Activated naive CD4-positive, alpha-beta T cell treated with anti-CD3 and anti-CD28 coated beads, Interleukin-2, amount 10 ng/mL, durations not matched to agents 7 days and 5 days (primary cell): ENCODE measurements at regions of chr5 and their contacts with region 1.

Region 1: GRCh38 chr5:143008809-143009521 is 238.8 kb downstream of the ARHGAP26 start:
- DNase-seq: peak; percentile 81
- H3K4me3 Mint-ChIP-seq: no peak overlapping the region
- H3K27ac Mint-ChIP-seq: peak overlapping the region; percentile 83
- H3K4me1 Mint-ChIP-seq: peaks cover 70% of the 10 kb centered on the region
- H3K27me3 Mint-ChIP-seq: no peaks in the 10 kb centered on the region

Region 2: GRCh38 chr5:142922223-142922952 is 86.6 kb before region 1 on chr5:
- CTCF ChIA-PET with region 1: interaction called, 29 read pairs
- DNase-seq: no peak
- H3K4me3 Mint-ChIP-seq: no peak overlapping the region
- H3K27ac Mint-ChIP-seq: peak overlapping the region; percentile 47
- H3K4me1 Mint-ChIP-seq: peaks cover 23% of the 10 kb centered on the region
- H3K27me3 Mint-ChIP-seq: no peaks in the 10 kb centered on the region

Region 3: DNA sequence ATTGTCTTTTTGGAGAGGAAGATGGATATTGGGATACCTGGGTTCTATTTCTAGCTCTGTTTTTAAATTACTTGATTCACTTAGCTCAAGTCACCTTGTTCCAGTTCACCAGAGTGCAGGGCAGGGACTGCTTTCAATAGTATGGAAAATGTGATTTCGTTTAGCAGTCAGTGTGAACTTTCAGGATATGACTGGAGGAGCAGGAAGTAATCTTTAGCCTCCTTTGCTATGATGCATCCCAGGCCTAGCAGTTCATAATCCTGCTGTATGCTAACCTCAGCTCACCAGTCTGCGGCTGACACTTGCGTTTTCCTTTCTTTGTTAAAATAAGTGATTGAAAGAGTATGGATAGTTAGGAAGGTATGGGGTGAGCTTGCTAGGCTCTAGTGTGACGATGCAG is 69.1 kb before region 1 on chr5:
- CTCF ChIA-PET with region 1: no interaction called
- DNase-seq: no peak
- H3K4me3 Mint-ChIP-seq: no peak overlapping the region
- H3K27ac Mint-ChIP-seq: no peak overlapping the region
- H3K4me1 Mint-ChIP-seq: peaks cover 10% of the 10 kb centered on the region
- H3K27me3 Mint-ChIP-seq: no peaks in the 10 kb centered on the region